Right cardiac atrium (tissue), 5 donors: ENCODE measurements at regions of chr5 and their contacts with region 1.

Region 1: GRCh38 chr5:177454397-177455035 is 7.9 kb downstream of the PRR7 start:
- DNase-seq: peak; percentile 91 to 97 (median 97)
- ATAC-seq: peak; percentile 72 to 73
- H3K4me3 ChIP-seq: peak overlapping the region; percentile 54
- H3K27ac ChIP-seq: no peak overlapping the region
- H3K4me1 ChIP-seq: no peaks in the 10 kb centered on the region
- H3K27me3 ChIP-seq: no peaks in the 10 kb centered on the region

Region 2: GRCh38 chr5:177390363-177391300 is 63.9 kb before region 1 on chr5:
- intact Hi-C with region 1: loop called in 3 of 4 experiments (anchors 5 kb)
- DNase-seq: peak; percentile 72 to 88 (median 83)
- ATAC-seq: peak; percentile 81 to 84
- H3K4me3 ChIP-seq: no peak overlapping the region
- H3K27ac ChIP-seq: no peak overlapping the region
- H3K4me1 ChIP-seq: no peaks in the 10 kb centered on the region
- H3K27me3 ChIP-seq: no peaks in the 10 kb centered on the region

Region 3: GRCh38 chr5:177403792-177404640 is 50.5 kb before region 1 on chr5:
- intact Hi-C with region 1: loop called (anchors 2 to 5 kb)
- DNase-seq: peak; percentile 89 to 96 (median 95)
- ATAC-seq: peak; percentile 95
- H3K4me3 ChIP-seq: peak overlapping the region; percentile 18
- H3K27ac ChIP-seq: no peak overlapping the region
- H3K4me1 ChIP-seq: no peaks in the 10 kb centered on the region
- H3K27me3 ChIP-seq: no peaks in the 10 kb centered on the region